Transverse colon (tissue), 4 donors: ENCODE measurements at regions of chr10 and their contacts with region 1.

Region 1: DNA sequence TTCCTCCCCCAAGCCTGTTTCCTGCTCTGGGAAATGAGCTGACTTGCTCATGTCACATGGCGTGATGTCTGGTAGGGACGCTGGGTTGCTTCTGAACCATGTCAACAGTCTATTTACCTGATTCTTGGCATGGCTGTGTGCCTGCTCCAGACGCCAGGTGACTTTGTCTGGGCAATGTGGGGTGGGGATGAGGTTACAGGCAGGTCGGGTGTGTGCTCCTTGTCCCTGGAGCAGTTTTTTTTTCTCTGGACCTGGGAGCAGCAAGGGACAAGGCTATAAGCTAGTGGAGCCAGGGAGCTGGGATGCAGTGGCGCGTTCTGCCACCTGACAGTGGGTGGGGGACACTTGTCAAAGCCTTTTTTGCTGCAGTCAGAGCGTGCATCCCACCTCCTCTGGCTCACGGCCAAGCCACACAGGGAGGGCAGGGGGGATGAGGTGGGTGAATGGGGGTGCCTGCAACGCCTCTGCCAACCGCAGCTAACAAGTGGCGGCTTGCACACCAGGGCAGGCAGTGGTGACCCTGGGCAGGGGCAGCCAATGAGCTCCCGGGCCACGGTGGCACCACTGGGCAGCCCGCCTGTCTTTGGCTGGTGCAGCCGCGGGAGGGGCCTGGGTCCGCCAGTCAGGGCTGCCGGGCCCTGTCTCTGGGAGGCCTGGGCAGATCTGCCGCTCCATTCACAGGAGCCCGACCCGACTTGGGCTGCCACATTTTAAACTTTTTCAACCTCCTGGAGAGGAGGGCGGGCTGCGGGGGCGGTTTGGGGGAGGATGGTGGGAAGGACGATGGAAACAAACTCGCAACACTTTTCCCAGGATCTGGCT is 22.9 kb downstream of the DNAJB12 start:
- DNase-seq: peak; percentile 86
- H3K4me3 ChIP-seq: no peak overlapping the region
- H3K27ac ChIP-seq: peak overlapping the region; percentile 80 to 86 (median 82)
- H3K4me1 ChIP-seq: peaks cover 46 to 81% (median 58%) of the 10 kb centered on the region in 4 donors
- H3K27me3 ChIP-seq: no peaks in the 10 kb centered on the region
- CTCF ChIP-seq: peak; percentile 27 to 87 (median 42)
- EP300 ChIP-seq: no peak
- POLR2A ChIP-seq: peak; percentile 50

Region 2: DNA sequence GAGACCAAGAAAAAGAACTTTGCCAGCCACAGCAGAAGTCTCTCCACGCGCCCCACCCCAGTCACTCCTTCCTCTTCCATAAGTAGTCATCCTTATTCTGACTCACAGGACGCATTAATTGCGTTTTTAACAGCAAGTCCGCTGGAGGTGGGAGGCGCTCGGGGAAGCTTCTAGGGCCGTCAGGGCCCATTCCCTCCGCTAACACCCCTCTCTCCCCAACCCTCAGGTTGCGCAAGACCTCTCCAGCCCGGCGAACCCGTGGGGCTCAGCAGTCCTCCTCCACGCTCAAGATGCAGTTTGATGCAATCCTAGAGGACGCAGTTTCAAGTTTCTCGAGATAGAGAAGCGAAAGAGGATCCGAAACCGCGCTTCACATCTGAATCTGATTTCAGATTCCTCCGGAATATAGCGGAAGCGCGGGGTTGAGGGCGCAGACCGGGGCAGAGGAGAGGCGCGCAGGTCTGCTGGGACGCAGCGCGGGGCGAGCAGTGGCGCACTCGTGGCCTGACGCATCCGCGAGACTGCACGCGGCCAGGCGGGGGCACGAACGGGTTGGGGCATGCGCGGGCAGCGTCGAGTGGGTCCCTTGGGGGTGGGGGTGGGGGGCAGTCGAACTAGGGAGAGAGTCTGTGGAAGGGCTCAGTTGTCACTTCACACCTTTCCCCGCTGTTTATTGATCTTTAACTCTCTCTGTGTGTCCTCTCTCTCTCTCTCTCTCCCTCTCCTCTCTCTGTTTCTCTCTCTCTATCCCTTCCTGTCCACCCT is 443.0 kb before region 1 on chr10:
- in situ Hi-C with region 1: loop called in 2 of 4 experiments (anchors 25 kb)
- intact Hi-C with region 1: no loop called
- DNase-seq: peak; percentile 78
- H3K4me3 ChIP-seq: peak overlapping the region; percentile 8 to 53 (median 29)
- H3K27ac ChIP-seq: peak overlapping the region; percentile 71 to 83 (median 76)
- H3K4me1 ChIP-seq: peaks cover 0 to 25% (median 14%) of the 10 kb centered on the region in 4 donors
- H3K27me3 ChIP-seq: peaks cover 3% of the 10 kb centered on the region
- CTCF ChIP-seq: no peak
- EP300 ChIP-seq: peak; percentile 32
- POLR2A ChIP-seq: no peak

Region 3: GRCh38 chr10:72126184-72126871 is 205.5 kb before region 1 on chr10:
- in situ Hi-C with region 1: loop called in 1 of 4 experiments (anchors 25 kb)
- intact Hi-C with region 1: no loop called
- DNase-seq: no peak
- H3K4me3 ChIP-seq: no peak overlapping the region
- H3K27ac ChIP-seq: no peak overlapping the region
- H3K4me1 ChIP-seq: peaks cover 0 to 22% (median 0%) of the 10 kb centered on the region in 4 donors
- H3K27me3 ChIP-seq: no peaks in the 10 kb centered on the region
- CTCF ChIP-seq: peak in 3 of 5 experiments; percentile 17 to 20 (median 18)
- EP300 ChIP-seq: no peak
- POLR2A ChIP-seq: no peak

Region 4: DNA sequence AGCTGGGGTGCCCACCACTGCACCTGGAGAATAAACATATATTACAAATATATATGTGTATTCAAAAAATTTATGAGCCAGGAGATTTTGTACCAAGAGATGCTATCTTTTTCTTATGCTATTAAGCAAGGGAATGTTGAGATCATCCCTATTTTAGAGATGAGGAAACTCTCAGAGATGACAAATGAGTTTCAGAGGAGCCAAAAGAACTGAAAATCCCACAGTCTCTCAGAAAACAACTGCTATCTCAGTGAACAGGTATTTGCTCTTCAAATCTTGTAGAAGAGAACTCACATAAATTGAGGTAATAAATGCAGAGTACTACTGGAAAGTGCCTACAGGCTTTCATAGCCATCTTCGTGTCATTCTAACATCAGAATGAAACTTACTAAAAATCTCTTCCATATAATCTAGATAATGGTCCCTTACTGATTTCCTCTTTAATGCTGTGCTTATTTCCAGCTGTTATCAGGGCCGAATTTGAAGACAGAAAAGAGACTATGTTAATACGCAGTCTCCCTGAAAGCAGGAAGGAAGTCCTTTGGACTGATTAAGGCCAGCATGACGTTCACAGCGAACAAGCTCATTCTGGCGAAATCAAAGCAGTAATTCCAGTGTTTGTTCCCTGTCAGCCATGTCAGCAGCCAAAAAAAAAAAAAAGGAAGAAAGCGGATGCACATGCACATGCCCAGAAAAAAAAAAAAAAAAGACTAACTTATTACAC is 145.4 kb before region 1 on chr10:
- in situ Hi-C with region 1: no loop called
- intact Hi-C with region 1: no loop called
- DNase-seq: peak; percentile 15
- H3K4me3 ChIP-seq: no peak overlapping the region
- H3K27ac ChIP-seq: peak overlapping the region; percentile 54 to 78 (median 72)
- H3K4me1 ChIP-seq: no peaks in the 10 kb centered on the region
- H3K27me3 ChIP-seq: no peaks in the 10 kb centered on the region
- CTCF ChIP-seq: no peak
- EP300 ChIP-seq: no peak
- POLR2A ChIP-seq: no peak

Region 5: GRCh38 chr10:72223743-72224101 is 108.1 kb before region 1 on chr10:
- in situ Hi-C with region 1: loop called in 3 of 4 experiments (anchors 10 to 25 kb)
- intact Hi-C with region 1: loop called (anchors 5 kb)
- DNase-seq: no peak
- H3K4me3 ChIP-seq: no peak overlapping the region
- H3K27ac ChIP-seq: peak overlapping the region; percentile 55 to 77 (median 68)
- H3K4me1 ChIP-seq: peaks cover 13 to 43% (median 18%) of the 10 kb centered on the region in 4 donors
- H3K27me3 ChIP-seq: no peaks in the 10 kb centered on the region
- CTCF ChIP-seq: no peak
- EP300 ChIP-seq: no peak
- POLR2A ChIP-seq: no peak

Region 6: DNA sequence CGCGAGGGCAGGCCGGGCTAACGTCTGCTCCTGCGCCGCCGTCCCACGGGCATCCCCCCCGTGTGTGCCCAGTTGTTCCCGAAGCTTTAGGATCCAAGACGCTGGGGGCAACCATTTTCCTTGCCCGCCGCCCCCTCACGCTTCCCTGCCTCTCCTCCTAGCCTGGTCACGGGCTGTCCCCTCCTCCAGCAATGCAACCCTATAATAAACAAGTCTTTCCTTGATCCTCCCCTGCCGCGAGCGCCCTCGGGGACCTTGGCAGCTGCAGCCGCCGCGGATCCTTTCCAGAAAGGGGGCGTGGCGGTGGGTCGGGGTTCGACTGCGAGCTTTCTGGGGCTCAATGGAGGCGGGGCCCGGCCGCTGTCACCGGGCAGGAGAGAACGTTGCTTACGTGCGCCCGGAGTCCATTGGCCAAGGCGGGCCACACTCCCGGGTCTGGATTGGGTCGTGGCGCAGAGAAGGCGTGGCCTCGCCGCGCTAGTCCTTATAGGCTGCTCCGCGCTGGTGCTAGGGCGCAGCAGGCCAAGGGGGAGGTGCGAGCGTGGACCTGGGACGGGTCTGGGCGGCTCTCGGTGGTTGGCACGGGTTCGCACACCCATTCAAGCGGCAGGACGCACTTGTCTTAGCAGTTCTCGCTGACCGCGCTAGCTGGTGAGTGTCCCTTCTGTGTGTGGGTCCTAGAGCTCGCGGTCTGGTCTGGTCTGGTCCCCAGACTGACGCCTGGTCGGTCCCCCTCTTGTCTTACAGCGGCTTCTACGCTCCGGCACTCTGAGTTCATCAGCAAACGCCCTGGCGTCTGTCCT is 58.2 kb before region 1 on chr10 and contains the start of gene DDIT4:
- in situ Hi-C with region 1: no loop called
- intact Hi-C with region 1: loop called (anchors 5 kb)
- DNase-seq: peak; percentile 100
- H3K4me3 ChIP-seq: peak within 1 kb of the TSS; percentile 67 to 95 (median 85)
- H3K27ac ChIP-seq: peak within 1 kb of the TSS; percentile 96 to 97 (median 97)
- H3K4me1 ChIP-seq: peaks cover 9 to 45% (median 42%) of the 10 kb centered on the region in 4 donors
- H3K27me3 ChIP-seq: no peaks in the 10 kb centered on the region
- CTCF ChIP-seq: no peak
- EP300 ChIP-seq: no peak
- POLR2A ChIP-seq: peak; percentile 100
- total RNA-seq, gene DDIT4: 64.5 to 356 (median 150) TPM